ENCODE measurements at regions of chr2 and their contacts with region 1.

Region 1: DNA sequence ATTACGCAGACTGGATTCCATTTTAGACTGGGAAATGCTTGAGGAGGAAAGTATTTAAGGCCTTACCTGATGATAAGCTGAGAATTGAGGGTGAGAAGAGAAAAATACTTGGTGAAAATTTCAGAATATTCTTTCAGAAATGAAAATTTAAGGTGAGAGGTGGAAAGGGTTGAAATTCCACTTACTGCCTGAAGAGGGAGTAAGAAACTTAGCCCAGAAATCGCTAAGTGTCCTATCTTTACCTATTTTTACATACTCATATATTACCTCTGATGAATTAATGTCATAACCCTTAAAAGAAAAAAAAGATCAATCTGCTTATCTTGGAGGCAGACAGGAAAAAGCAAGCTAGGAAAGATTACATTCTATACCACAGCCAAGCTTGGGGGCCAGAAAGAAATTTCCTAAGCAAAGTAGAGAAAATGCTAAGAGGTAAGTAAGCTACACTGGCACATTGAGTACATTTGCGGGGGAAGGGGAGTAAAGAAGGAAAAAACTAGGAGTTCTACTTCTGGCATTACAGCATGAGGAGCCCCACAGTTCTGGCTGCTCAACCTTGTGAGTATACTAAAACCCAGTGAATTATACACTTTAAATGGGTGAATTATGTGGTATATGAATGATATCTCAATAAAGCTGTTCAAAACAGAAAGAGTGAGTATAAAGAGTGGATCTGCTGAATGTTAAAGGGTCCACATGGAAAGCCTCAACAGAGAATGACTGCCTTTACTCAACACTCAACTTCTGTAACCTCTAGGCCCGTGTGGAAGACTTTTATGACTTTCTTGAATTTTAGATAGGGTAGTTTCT is 33.8 kb downstream of the SMC6 start:
- DNase-seq: peak; percentile 55
- ATAC-seq: peak; percentile 49
- H3K4me3 ChIP-seq: no peak overlapping the region
- H3K4me3 Mint-ChIP-seq: no peak overlapping the region
- H3K27ac ChIP-seq: peak overlapping the region in 1 of 2 donors; percentile 21
- H3K27ac Mint-ChIP-seq: peak overlapping the region; percentile 54
- H3K4me1 ChIP-seq: no peaks in the 10 kb centered on the region
- H3K4me1 Mint-ChIP-seq: peaks cover 6% of the 10 kb centered on the region
- H3K27me3 ChIP-seq: no peaks in the 10 kb centered on the region
- H3K27me3 Mint-ChIP-seq: no peaks in the 10 kb centered on the region
- CTCF ChIP-seq: peak; percentile 96

Region 2: GRCh38 chr2:17753803-17754663 is 34.3 kb after region 1 on chr2 and contains the starts of genes GEN1 and SMC6:
- CTCF ChIA-PET with region 1: interaction called, 4 read pairs
- POLR2A ChIA-PET with region 1: no interaction called
- intact Hi-C with region 1: loop called (anchors 1 kb)
- DNase-seq: peak; percentile 97
- ATAC-seq: peak; percentile 80
- H3K4me3 ChIP-seq: peak within 1 kb of the TSS; percentile 86 to 93 (median 92)
- H3K4me3 Mint-ChIP-seq: peak within 1 kb of the TSS; percentile 81
- H3K27ac ChIP-seq: peak within 1 kb of the TSS; percentile 94 to 96
- H3K27ac Mint-ChIP-seq: peak within 1 kb of the TSS; percentile 87
- H3K4me1 ChIP-seq: peaks cover 34 to 36% of the 10 kb centered on the region in 2 donors
- H3K4me1 Mint-ChIP-seq: peaks cover 52% of the 10 kb centered on the region
- H3K27me3 ChIP-seq: no peaks in the 10 kb centered on the region
- H3K27me3 Mint-ChIP-seq: no peaks in the 10 kb centered on the region
- CTCF ChIP-seq: no peak
- total RNA-seq, gene GEN1: 105 and 111 TPM in 2 replicates
- total RNA-seq, gene SMC6: 111 and 124 TPM in 2 replicates

Region 3: DNA sequence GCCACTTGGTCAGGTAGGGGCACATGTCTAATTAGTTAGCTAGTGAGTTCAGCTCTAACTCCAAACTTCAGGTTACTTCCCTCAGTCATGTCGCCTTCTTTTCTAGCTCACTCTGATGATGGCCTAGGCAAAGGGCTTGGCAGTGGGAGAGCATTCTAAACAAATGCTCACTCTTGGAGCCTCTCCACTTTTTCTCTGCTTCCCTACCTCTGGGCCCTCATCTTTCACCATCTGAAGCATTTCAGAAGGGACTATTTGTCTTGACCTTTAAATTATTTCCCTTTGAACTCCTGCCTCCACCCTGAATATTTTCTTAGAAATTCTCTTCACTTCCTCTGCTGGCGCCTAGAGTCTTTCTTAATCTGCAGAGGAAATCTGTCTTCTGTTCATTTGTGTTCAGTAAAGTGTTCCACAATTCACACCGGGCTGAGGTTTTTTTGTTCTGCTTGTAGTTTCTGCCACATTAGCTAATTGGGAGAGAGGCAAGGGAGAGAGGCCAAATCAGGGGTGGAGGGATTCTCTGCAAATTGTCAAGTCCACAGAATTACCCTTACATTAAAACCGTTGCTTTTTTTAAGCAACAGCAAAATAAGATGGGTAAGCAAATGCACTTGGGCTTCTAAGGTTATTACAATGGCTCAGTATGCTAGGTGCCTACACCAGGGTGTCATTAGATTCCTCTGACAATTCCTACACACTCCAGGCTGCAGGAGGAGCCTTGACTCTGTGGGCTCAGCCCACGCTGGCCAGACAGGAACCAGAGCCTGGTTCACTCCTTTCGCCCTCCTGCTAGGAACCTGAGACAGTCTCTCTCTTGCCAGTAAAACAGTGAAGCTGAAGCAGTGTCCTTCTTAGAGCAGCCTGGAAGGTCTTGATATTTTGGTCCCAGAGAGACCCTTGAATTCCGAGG is 102.0 kb after region 1 on chr2:
- CTCF ChIA-PET with region 1: interaction called, 155 read pairs
- POLR2A ChIA-PET with region 1: no interaction called
- intact Hi-C with region 1: no loop called
- DNase-seq: no peak
- ATAC-seq: no peak
- H3K4me3 ChIP-seq: peak overlapping the region in 1 of 5 experiments; percentile 11
- H3K4me3 Mint-ChIP-seq: peak overlapping the region; percentile 72
- H3K27ac ChIP-seq: peak overlapping the region; percentile 63 to 79
- H3K27ac Mint-ChIP-seq: peak overlapping the region; percentile 78
- H3K4me1 ChIP-seq: peaks cover 46 to 49% of the 10 kb centered on the region in 2 donors
- H3K4me1 Mint-ChIP-seq: peaks cover 66% of the 10 kb centered on the region
- H3K27me3 ChIP-seq: no peaks in the 10 kb centered on the region
- H3K27me3 Mint-ChIP-seq: no peaks in the 10 kb centered on the region
- CTCF ChIP-seq: no peak

Region 4: DNA sequence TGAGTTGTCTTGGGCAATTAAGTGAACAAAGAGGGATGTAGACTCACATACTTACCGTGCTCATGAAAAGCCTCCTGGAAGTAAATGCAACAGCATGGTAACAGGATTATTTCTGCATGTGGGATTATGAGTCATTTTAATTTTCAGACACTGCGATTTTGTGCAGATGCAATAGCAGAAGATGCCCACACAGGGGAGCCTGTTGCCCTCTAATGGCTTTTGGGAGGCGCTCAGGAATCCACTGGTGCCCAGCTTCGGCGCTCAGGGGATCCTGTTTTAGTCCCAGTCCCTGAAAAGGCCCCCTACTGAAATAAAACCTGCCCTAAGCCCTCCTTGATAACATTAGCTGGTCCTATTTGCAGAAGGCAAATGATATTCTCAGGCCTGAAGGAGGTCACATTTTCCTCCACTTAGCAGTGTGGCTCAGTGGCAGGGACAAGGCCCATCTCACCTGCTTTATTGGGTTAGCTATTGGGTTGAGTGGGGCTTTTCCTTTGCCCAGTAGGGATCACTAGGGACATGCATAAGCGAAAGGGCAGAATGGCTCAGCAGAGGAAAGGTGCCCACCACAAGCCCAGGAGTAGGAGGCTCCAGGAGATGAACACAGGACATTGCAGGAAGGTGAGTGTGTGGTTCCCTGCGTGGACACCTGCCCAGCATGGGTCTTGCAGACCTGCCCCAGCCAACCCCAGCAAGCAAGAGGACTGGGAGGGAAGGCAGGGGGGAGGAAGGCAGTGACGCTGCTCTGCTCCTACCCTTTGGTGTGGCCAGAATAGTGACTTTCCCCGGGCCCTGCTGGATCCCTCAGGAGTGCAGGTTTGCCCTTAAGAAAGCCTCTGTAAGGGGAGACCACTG is 132.2 kb after region 1 on chr2:
- CTCF ChIA-PET with region 1: interaction called, 14 read pairs
- POLR2A ChIA-PET with region 1: no interaction called
- intact Hi-C with region 1: no loop called
- DNase-seq: peak; percentile 51
- ATAC-seq: peak; percentile 69
- H3K4me3 ChIP-seq: no peak overlapping the region
- H3K4me3 Mint-ChIP-seq: no peak overlapping the region
- H3K27ac ChIP-seq: no peak overlapping the region
- H3K27ac Mint-ChIP-seq: no peak overlapping the region
- H3K4me1 ChIP-seq: peaks cover 0 to 5% of the 10 kb centered on the region in 2 donors
- H3K4me1 Mint-ChIP-seq: peaks cover 5% of the 10 kb centered on the region
- H3K27me3 ChIP-seq: peaks cover 0 to under 1% (median 0%) of the 10 kb centered on the region in 4 experiments
- H3K27me3 Mint-ChIP-seq: peaks cover 3% of the 10 kb centered on the region
- CTCF ChIP-seq: peak; percentile 81

Region 5: GRCh38 chr2:18149645-18150246 is 430.0 kb after region 1 on chr2:
- CTCF ChIA-PET with region 1: interaction called, 15 read pairs
- POLR2A ChIA-PET with region 1: no interaction called
- intact Hi-C with region 1: loop called (anchors 2 kb)
- DNase-seq: peak; percentile 25
- ATAC-seq: no peak
- H3K4me3 ChIP-seq: no peak overlapping the region
- H3K4me3 Mint-ChIP-seq: no peak overlapping the region
- H3K27ac ChIP-seq: no peak overlapping the region
- H3K27ac Mint-ChIP-seq: no peak overlapping the region
- H3K4me1 ChIP-seq: no peaks in the 10 kb centered on the region
- H3K4me1 Mint-ChIP-seq: no peaks in the 10 kb centered on the region
- H3K27me3 ChIP-seq: no peaks in the 10 kb centered on the region
- H3K27me3 Mint-ChIP-seq: peaks cover 22% of the 10 kb centered on the region
- CTCF ChIP-seq: peak; percentile 70

Measured in B cell (primary cell).